Endothelial cell of umbilical vein (primary cell): ENCODE measurements at regions of chr6 and their contacts with region 1.

Region 1: GRCh38 chr6:109187399-109188114 is 92.2 kb downstream of the CEP57L1 start:
- DNase-seq: peak; percentile 44
- H3K4me3 ChIP-seq: no peak overlapping the region
- H3K27ac ChIP-seq: no peak overlapping the region
- H3K4me1 ChIP-seq: no peaks in the 10 kb centered on the region
- H3K27me3 ChIP-seq: peaks cover 23 to 45% of the 10 kb centered on the region in 2 experiments
- CTCF ChIP-seq: peak; percentile 77 to 78
- POLR2A ChIP-seq: no peak

Region 2: DNA sequence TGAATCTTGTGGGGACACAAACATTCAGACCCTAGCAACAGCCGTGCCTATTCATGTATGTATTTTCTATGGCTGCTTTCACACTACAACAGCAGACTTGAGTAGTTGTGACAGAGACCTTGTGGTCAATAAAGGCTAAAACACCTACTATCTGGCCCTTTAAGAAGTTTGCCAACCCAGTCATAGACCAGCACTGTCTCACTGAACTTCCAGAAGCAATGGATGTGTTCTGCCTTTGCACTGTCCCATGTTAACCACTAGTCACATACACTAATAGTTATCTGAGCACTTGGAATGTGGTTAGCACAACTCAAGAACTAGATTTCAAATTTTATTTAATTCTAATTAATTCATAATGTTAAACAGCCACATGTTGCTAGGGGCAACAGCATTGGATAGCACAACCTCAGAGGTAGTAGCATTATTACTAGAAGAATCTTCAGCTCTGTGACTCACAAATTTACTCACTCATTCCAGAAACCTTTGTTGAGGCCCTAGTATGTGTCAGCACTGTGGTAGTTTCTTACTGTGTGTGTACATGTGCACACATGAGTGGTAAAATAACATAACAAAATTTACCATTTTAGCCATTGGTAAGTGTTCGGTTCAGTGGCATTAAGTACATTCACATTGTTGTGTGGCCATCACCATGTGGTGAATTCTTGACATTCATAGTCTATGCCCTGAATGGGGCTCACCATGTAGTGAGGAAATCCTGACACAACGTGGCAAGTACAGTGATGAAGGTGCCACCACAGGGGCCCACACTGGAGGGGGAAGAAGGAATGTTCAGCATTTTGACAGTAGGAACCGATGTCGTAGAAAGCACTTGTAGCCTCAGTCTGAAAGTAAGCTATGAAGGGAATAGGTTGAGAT is 15.1 kb after region 1 on chr6:
- CTCF ChIA-PET with region 1: interaction called, 13 read pairs
- POLR2A ChIA-PET with region 1: no interaction called
- dilution Hi-C with region 1: no loop called
- intact Hi-C with region 1: no loop called
- DNase-seq: no peak
- H3K4me3 ChIP-seq: no peak overlapping the region
- H3K27ac ChIP-seq: no peak overlapping the region
- H3K4me1 ChIP-seq: no peaks in the 10 kb centered on the region
- H3K27me3 ChIP-seq: peaks cover 2 to 6% of the 10 kb centered on the region in 2 experiments
- CTCF ChIP-seq: no peak
- POLR2A ChIP-seq: no peak

Region 3: DNA sequence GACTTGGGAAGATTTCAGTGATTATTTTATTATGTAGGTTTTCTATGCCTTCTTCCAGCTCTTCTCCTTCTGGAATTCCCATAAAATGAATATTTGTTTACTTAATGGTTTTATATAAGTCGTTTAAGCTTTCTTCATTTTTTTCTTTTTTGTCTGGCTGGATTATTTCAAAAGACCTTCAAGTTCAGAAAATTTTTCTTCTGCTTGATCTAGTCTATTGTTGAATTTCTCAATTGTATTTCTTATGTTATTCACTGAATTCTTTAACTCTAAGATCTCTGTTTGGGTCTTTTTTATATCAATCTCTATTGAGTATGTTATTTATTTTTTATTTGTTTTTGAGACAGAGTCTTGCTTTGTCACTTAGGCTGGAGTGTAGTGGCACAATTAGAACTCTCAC is 25.1 kb after region 1 on chr6:
- CTCF ChIA-PET with region 1: no interaction called
- POLR2A ChIA-PET with region 1: no interaction called
- dilution Hi-C with region 1: no loop called
- intact Hi-C with region 1: no loop called
- DNase-seq: no peak
- H3K4me3 ChIP-seq: no peak overlapping the region
- H3K27ac ChIP-seq: no peak overlapping the region
- H3K4me1 ChIP-seq: no peaks in the 10 kb centered on the region
- H3K27me3 ChIP-seq: peaks cover 1 to 11% of the 10 kb centered on the region in 2 experiments
- CTCF ChIP-seq: no peak
- POLR2A ChIP-seq: no peak

Region 4: GRCh38 chr6:109349419-109350078 is 162.0 kb after region 1 on chr6:
- CTCF ChIA-PET with region 1: interaction called, 11 read pairs
- POLR2A ChIA-PET with region 1: no interaction called
- dilution Hi-C with region 1: no loop called
- intact Hi-C with region 1: no loop called
- DNase-seq: peak; percentile 55
- H3K4me3 ChIP-seq: no peak overlapping the region
- H3K27ac ChIP-seq: no peak overlapping the region
- H3K4me1 ChIP-seq: no peaks in the 10 kb centered on the region
- H3K27me3 ChIP-seq: no peaks in the 10 kb centered on the region
- CTCF ChIP-seq: no peak
- POLR2A ChIP-seq: no peak

Region 5: DNA sequence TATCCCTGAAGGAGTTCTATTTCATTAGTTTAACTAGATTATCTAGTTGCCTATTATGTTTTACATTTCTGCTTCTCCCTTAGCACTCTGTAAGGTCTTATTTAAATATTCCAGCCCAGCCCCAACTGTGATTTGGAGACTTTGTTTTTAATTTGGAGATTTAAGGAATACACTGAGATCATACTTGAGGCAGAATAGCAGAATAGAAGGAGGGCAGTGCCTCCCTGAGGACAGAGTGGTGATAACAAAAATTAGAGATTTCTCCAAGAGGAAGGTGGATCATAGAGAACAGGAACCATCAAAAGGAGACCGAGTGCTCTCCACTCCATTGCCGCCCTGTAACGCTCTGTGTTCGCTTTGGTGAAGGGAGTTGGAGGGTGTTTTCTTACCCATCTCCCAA is 209.5 kb after region 1 on chr6:
- CTCF ChIA-PET with region 1: interaction called, 41 read pairs
- POLR2A ChIA-PET with region 1: no interaction called
- dilution Hi-C with region 1: no loop called
- intact Hi-C with region 1: no loop called
- DNase-seq: peak; percentile 35
- H3K4me3 ChIP-seq: no peak overlapping the region
- H3K27ac ChIP-seq: no peak overlapping the region
- H3K4me1 ChIP-seq: no peaks in the 10 kb centered on the region
- H3K27me3 ChIP-seq: no peaks in the 10 kb centered on the region
- CTCF ChIP-seq: no peak
- POLR2A ChIP-seq: no peak

Region 6: DNA sequence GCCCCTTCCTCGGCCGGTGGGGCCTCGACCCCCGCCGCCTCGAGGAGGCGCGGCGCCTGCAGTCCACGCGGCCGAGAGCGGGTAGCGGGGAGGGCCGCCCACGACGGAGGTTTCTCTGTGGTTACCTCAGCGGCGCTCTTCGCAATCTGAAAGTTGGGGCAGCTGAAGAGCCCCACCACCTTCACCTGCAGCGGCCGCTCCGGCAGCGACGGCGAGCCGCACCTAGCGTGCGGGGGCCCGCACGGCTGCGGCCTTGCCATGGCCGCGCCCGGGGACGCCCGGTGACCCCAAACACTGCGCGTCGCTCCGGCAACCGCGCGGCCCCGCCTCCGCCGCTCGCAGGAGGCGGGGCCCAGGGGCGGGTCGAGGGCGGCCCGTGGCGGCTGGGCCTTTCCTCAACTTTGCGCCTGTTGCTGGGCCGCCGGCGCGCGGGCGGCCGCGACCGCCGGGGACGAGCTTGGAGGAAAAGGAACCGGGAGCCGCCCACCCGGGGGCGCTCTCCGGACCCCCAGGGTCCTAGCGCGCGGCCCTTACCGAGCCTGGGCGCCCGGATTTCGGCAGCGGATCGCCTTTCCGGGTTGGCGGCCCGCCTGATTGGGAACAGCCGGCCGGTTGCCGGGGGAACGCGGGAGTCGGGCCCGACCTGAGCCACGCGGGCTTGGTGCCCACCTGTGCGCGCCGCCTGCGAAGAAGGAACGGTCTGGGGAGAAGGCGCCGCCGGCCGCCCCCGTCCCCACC is 252.9 kb after region 1 on chr6 and contains the starts of genes PPIL6 and SMPD2:
- CTCF ChIA-PET with region 1: interaction called, 20 read pairs
- POLR2A ChIA-PET with region 1: no interaction called
- dilution Hi-C with region 1: no loop called
- intact Hi-C with region 1: loop called (anchors 2 kb)
- DNase-seq: peak; percentile 86
- H3K4me3 ChIP-seq: peak within 1 kb of the TSS; percentile 62 to 73 (median 66)
- H3K27ac ChIP-seq: peak within 1 kb of the TSS; percentile 59
- H3K4me1 ChIP-seq: peaks cover 3% of the 10 kb centered on the region
- H3K27me3 ChIP-seq: no peaks in the 10 kb centered on the region
- CTCF ChIP-seq: peak in 1 of 2 donors; percentile 41
- POLR2A ChIP-seq: no peak
- total RNA-seq, gene PPIL6: 0.25 and 0.33 TPM in 2 replicates
- total RNA-seq, gene SMPD2: 6.9 and 8.5 TPM in 2 replicates